Motor neuron (in vitro differentiated cells): ENCODE measurements at regions of chr1 and their contacts with region 1.

Region 1: GRCh38 chr1:172699111-172699510 is 40.2 kb downstream of the FASLG start:
- ATAC-seq: no peak
- H3K4me3 ChIP-seq: no peak overlapping the region
- H3K27ac ChIP-seq: no peak overlapping the region
- H3K4me1 ChIP-seq: peaks cover 6 to 12% of the 10 kb centered on the region in 2 donors

Region 2: GRCh38 chr1:171769171-171769570 is 929.9 kb before region 1 on chr1:
- in situ Hi-C with region 1: no loop called
- ATAC-seq: peak in 2 of 8 experiments; percentile 41 to 67
- H3K4me3 ChIP-seq: no peak overlapping the region
- H3K27ac ChIP-seq: no peak overlapping the region
- H3K4me1 ChIP-seq: peaks cover 0 to 4% of the 10 kb centered on the region in 2 donors

Region 3: GRCh38 chr1:172351761-172352161 is 347.4 kb before region 1 on chr1:
- in situ Hi-C with region 1: no loop called
- ATAC-seq: peak in 5 of 8 experiments; percentile 22 to 67 (median 56)
- H3K4me3 ChIP-seq: no peak overlapping the region
- H3K27ac ChIP-seq: no peak overlapping the region
- H3K4me1 ChIP-seq: peaks cover 13 to 23% of the 10 kb centered on the region in 2 donors

Region 4: GRCh38 chr1:172449585-172450534 is 249.3 kb before region 1 on chr1:
- in situ Hi-C with region 1: loop called in 3 of 9 experiments (anchors 25 kb)
- ATAC-seq: peak; percentile 75 to 99 (median 90)
- H3K4me3 ChIP-seq: no peak overlapping the region
- H3K27ac ChIP-seq: no peak overlapping the region
- H3K4me1 ChIP-seq: peaks cover 2 to 7% of the 10 kb centered on the region in 2 donors

Region 5: DNA sequence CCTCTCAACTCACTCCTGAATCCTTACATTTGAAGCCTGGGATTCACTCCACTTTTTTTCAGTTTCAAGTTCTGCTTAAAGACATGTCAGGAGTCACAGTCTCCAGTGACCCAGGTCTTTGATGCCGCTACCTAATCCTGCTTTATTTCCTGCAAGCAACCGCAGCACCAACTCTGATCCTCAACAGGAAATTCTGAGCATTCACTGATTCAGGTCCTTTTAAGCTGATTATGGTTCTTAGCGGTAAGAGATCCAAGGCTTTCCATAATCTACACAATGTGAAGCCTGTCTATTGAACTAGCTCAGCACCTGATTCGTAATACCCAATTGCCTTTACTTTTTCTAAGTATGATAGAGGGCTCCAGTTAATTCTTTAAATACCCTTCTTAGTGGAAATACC is 211.6 kb before region 1 on chr1:
- in situ Hi-C with region 1: no loop called
- ATAC-seq: no peak
- H3K4me3 ChIP-seq: no peak overlapping the region
- H3K27ac ChIP-seq: no peak overlapping the region
- H3K4me1 ChIP-seq: no peaks in the 10 kb centered on the region